ENCODE measurements at regions of chrX and their contacts with region 1.

Region 1: DNA sequence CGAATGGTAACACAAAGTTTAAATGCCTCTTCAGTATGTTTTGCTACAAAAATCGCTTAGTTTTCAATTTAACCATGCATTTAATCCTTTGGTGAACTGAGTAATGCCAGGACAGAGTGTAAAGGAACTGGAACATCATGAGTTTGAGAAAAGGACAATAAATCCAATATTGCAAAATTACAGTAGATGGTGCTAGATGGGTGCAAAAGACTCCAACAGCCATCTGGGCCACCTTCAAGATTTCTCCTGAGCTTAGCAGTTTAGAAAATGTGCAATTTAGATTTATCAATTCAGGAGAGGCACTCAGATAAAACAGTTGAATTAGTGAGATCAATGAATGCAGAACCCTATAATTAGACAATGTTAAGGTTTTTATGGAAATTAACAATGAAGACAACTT is 33.2 kb upstream of the MID1IP1 start:
- DNase-seq: no peak
- ATAC-seq: peak in 3 of 4 donors; percentile 44 to 71 (median 48)
- H3K4me3 ChIP-seq: no peak overlapping the region
- H3K27ac ChIP-seq: no peak overlapping the region
- H3K4me1 ChIP-seq: no peaks in the 10 kb centered on the region
- H3K27me3 ChIP-seq: no peaks in the 10 kb centered on the region
- CTCF ChIP-seq: peak; percentile 46

Region 2: GRCh38 chrX:38699696-38700095 is 68.4 kb before region 1 on chrX:
- intact Hi-C with region 1: no loop called
- DNase-seq: no peak
- ATAC-seq: peak; percentile 38 to 78 (median 58)
- H3K4me3 ChIP-seq: no peak overlapping the region
- H3K27ac ChIP-seq: no peak overlapping the region
- H3K4me1 ChIP-seq: no peaks in the 10 kb centered on the region
- H3K27me3 ChIP-seq: peaks cover 0 to 13% (median 0%) of the 10 kb centered on the region in 3 donors
- CTCF ChIP-seq: no peak

Region 3: DNA sequence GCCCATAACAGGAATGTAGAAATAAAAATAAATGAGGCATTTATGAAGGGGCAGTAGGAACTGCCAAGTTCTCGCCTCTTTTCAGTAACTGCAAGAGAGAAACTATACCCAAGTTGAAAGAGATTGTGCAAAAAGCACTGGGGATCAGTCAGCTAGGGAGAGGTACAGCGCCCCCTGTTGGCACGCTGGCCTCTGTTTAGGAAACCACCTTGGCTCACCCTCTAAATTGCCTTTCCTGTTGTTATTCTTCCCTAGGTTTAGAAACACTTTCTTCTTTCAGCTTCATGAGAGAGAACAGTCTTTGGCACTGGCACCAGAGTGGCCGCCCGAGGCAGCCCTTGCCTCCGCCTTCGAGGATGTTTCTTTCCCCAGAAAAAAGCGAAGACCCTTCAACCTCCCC is 381.7 kb after region 1 on chrX:
- intact Hi-C with region 1: loop called in 1 of 2 experiments (anchors 5 kb)
- DNase-seq: peak; percentile 75 to 86
- ATAC-seq: peak; percentile 70 to 88 (median 74)
- H3K4me3 ChIP-seq: no peak overlapping the region
- H3K27ac ChIP-seq: no peak overlapping the region
- H3K4me1 ChIP-seq: no peaks in the 10 kb centered on the region
- H3K27me3 ChIP-seq: peaks cover 0 to 17% (median 0%) of the 10 kb centered on the region in 3 donors
- CTCF ChIP-seq: peak; percentile 74

Region 4: GRCh38 chrX:39381422-39381821 is 613.3 kb after region 1 on chrX:
- intact Hi-C with region 1: no loop called
- DNase-seq: no peak
- ATAC-seq: no peak
- H3K4me3 ChIP-seq: no peak overlapping the region
- H3K27ac ChIP-seq: no peak overlapping the region
- H3K4me1 ChIP-seq: no peaks in the 10 kb centered on the region
- H3K27me3 ChIP-seq: peaks cover 0 to 22% (median 0%) of the 10 kb centered on the region in 3 donors
- CTCF ChIP-seq: no peak

Measured in psoas muscle (tissue), 8 donors.